ENCODE measurements at regions of chr15 and their contacts with region 1.

Region 1: GRCh38 chr15:85625856-85626255 is 168.9 kb downstream of the KLHL25 start:
- DNase-seq: peak in 2 of 5 donors; percentile 45 to 83
- H3K4me3 ChIP-seq: no peak overlapping the region
- H3K27ac ChIP-seq: peak overlapping the region in 1 of 2 donors; percentile 56
- H3K4me1 ChIP-seq: no peaks in the 10 kb centered on the region
- H3K27me3 ChIP-seq: no peaks in the 10 kb centered on the region
- CTCF ChIP-seq: no peak

Region 2: GRCh38 chr15:85689729-85690128 is 63.9 kb after region 1 on chr15:
- intact Hi-C with region 1: loop called (anchors 10 kb)
- DNase-seq: peak in 4 of 5 donors; percentile 49 to 89 (median 68)
- H3K4me3 ChIP-seq: peak overlapping the region; percentile 50 to 71 (median 64)
- H3K27ac ChIP-seq: peak overlapping the region in 1 of 2 donors; percentile 45
- H3K4me1 ChIP-seq: peaks cover 0 to 10% (median 0%) of the 10 kb centered on the region in 3 donors
- H3K27me3 ChIP-seq: no peaks in the 10 kb centered on the region
- CTCF ChIP-seq: no peak

Measured in kidney (tissue), 22 donors.